ENCODE measurements at regions of chr18 and their contacts with region 1.

Region 1: DNA sequence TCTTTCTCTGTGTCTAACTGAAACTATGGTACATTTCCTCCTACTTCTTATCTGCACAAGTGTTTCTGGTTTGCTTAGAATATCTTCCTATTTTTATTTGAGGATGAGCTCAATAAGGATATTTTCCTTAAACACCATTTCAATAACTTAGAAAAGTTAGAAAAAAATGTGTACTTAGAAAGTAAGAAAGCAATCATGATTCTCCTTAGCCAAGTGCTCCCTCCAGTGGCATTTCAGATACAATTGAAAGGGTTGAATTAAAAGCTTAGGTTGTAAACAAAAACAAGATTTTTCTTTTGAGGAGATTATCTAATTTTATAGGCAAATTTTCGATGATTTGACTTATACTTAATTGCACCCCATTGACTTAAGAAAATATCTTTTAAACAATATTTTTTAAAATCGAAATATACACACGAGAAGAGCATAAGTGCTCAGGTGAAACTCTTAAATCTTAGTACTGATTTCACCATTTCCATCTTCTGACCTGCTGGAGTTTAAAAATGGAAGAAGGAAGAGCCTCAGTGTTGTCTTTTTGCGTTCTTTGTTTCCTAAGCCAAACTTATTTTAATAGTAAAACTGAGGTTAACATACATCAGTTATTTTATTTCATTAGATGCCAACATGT is 26.9 kb downstream of the C18orf63 start:
- DNase-seq: no peak
- H3K4me3 Mint-ChIP-seq: no peak overlapping the region
- H3K27ac Mint-ChIP-seq: no peak overlapping the region
- H3K4me1 Mint-ChIP-seq: no peaks in the 10 kb centered on the region
- H3K27me3 Mint-ChIP-seq: peaks cover 6% of the 10 kb centered on the region

Region 2: GRCh38 chr18:74040459-74041332 is 301.8 kb before region 1 on chr18:
- CTCF ChIA-PET with region 1: interaction called, 5 read pairs
- POLR2A ChIA-PET with region 1: no interaction called
- intact Hi-C with region 1: loop called (anchors 5 kb)
- DNase-seq: peak; percentile 78
- H3K4me3 Mint-ChIP-seq: no peak overlapping the region
- H3K27ac Mint-ChIP-seq: no peak overlapping the region
- H3K4me1 Mint-ChIP-seq: no peaks in the 10 kb centered on the region
- H3K27me3 Mint-ChIP-seq: peaks cover 3% of the 10 kb centered on the region

Region 3: GRCh38 chr18:74196220-74197119 is 146.1 kb before region 1 on chr18:
- CTCF ChIA-PET with region 1: interaction called, 46 read pairs
- POLR2A ChIA-PET with region 1: no interaction called
- intact Hi-C with region 1: loop called (anchors 1 kb)
- DNase-seq: peak; percentile 59
- H3K4me3 Mint-ChIP-seq: peak overlapping the region; percentile 69
- H3K27ac Mint-ChIP-seq: peak overlapping the region; percentile 56
- H3K4me1 Mint-ChIP-seq: peaks cover 6% of the 10 kb centered on the region
- H3K27me3 Mint-ChIP-seq: peaks cover under 1% of the 10 kb centered on the region

Region 4: DNA sequence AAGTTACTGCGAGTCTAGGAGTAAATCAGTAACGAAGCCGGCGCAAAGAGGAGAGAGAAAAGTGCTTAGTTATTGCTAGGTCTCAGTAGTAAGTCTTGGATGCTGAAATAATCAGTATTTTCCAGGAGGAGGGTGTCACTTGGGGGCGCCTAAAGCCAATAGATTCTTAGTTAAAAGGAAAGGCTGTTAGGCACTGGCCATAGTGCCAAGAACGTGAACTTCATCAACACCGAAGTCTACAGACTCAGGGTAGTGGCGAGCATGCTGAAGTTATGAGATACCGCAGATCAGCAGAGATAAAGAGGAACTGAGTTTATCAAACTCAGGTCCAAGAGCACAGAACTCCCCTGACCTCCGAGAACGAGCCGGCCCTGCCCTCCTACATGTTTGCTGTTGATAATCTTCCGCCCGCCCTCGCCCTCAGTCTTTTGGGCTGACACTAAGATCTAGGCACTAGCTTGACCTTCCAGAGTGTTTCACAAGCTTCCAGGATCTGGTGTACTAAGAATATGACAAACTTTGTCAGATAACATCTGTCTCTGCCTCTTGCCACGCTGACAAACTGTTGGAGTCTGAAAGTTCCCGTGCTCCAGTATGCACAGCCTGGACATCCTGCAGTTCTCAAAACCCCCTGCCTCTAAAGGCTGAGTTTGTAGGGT is 100.0 kb before region 1 on chr18:
- CTCF ChIA-PET with region 1: interaction called, 4 read pairs
- POLR2A ChIA-PET with region 1: no interaction called
- intact Hi-C with region 1: loop called (anchors 5 kb)
- DNase-seq: no peak
- H3K4me3 Mint-ChIP-seq: no peak overlapping the region
- H3K27ac Mint-ChIP-seq: no peak overlapping the region
- H3K4me1 Mint-ChIP-seq: peaks cover under 1% of the 10 kb centered on the region
- H3K27me3 Mint-ChIP-seq: peaks cover 19% of the 10 kb centered on the region

Region 5: DNA sequence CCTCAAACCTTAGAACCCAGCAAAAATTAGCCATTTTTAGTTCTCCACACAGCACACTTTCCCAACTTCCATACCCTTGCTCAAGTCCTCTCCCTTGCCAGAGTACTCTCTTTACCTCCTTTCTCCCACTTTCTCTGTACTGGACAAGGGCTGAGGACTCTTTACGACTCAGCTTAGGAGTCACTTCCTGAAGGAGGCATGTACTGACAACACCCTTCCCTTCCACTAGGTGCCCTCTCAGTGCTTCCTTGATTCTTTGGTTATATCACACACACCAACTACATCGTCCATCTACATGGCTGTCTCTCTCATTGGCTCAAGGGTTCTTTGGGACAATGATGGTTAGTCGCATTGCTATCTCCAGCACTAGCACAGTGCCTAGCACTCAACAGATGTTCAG is 32.1 kb before region 1 on chr18:
- CTCF ChIA-PET with region 1: interaction called, 4 read pairs
- POLR2A ChIA-PET with region 1: no interaction called
- intact Hi-C with region 1: loop called (anchors 2 kb)
- DNase-seq: no peak
- H3K4me3 Mint-ChIP-seq: no peak overlapping the region
- H3K27ac Mint-ChIP-seq: no peak overlapping the region
- H3K4me1 Mint-ChIP-seq: no peaks in the 10 kb centered on the region
- H3K27me3 Mint-ChIP-seq: peaks cover 30% of the 10 kb centered on the region

Measured in activated CD4-positive, alpha-beta memory T cell treated with anti-CD3 and anti-CD28 coated beads for 36 hours (primary cell).